Dorsolateral prefrontal cortex (tissue), 120 donors: ENCODE measurements at regions of chr6 and their contacts with region 1.

Region 1: DNA sequence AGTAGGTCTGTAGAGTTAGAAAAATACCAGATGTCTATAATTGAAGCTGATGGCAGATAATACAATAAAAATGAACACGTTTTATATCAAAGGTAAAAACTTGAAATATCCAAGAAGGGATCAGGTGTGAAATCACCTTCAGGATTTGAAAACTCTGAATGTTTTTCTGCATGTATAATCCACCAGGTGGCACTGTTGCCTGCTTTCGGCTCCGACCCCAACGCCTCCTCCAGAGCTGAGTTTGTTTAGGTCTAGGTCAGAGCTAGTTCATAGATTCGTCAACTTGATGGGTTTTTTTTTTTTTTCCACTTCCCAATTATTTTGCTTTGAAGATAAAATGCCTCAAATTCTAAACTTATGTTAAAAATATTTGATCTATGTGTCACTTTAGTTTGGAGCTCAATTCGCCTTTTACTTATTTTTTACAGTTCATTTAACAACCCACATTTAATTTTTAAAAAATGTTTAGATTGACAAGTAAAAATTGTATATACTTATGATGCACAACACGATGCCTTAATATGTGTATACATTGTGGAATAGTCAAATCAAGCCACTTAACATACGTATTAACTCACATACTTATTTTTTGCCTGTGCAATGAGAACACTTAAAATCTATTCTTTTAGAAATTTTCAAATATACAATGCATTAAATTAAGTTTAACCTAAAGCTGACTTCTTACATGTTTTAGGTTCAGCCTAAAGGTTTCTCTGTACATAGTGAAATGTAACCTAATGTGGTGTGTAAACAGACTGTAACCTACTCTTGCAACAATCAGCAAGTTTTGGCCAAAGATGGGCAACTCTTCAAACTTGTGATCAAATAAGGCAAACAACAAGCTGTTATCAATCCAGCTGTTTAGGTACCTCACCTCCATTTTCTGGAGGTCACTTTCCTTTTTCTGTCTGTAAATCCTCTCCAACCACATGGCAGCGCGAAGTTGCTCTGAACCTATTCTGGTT is 39.4 kb upstream of the ENPP4 start:
- DNase-seq: peak; percentile 50 to 75 (median 62)
- H3K4me3 ChIP-seq: no peak overlapping the region
- H3K27ac ChIP-seq: no peak overlapping the region
- H3K27me3 ChIP-seq: no peaks in the 10 kb centered on the region
- CTCF ChIP-seq: peak; percentile 83 to 98 (median 92)

Region 2: GRCh38 chr6:46129629-46130511 is 39.5 kb after region 1 on chr6 and contains the start of gene ENPP4:
- intact Hi-C with region 1: loop called in 1 of 2 experiments (anchors 5 kb)
- DNase-seq: peak; percentile 77 to 91 (median 89)
- H3K4me3 ChIP-seq: peak within 1 kb of the TSS; percentile 47 to 96 (median 84)
- H3K27ac ChIP-seq: peak within 1 kb of the TSS; percentile 45 to 96 (median 85)
- H3K27me3 ChIP-seq: no peaks in the 10 kb centered on the region
- CTCF ChIP-seq: peak in 52 of 56 donors; percentile 6 to 68 (median 40)
- total RNA-seq, gene ENPP4: 20.6 to 69.1 (median 33.4) TPM

Region 3: GRCh38 chr6:46410334-46410953 is 320.0 kb after region 1 on chr6:
- intact Hi-C with region 1: loop called (anchors 2 to 5 kb)
- DNase-seq: peak in 3 of 10 donors; percentile 27 to 30 (median 28)
- H3K4me3 ChIP-seq: no peak overlapping the region
- H3K27ac ChIP-seq: peak overlapping the region in 47 of 59 donors; percentile 4 to 86 (median 61)
- H3K27me3 ChIP-seq: no peaks in the 10 kb centered on the region
- CTCF ChIP-seq: peak; percentile 53 to 99 (median 90)

Region 4: GRCh38 chr6:46637145-46637544 is 546.7 kb after region 1 on chr6:
- intact Hi-C with region 1: loop called in 1 of 2 experiments (anchors 10 kb)
- DNase-seq: no peak
- H3K4me3 ChIP-seq: no peak overlapping the region
- H3K27ac ChIP-seq: no peak overlapping the region
- H3K27me3 ChIP-seq: no peaks in the 10 kb centered on the region
- CTCF ChIP-seq: no peak